ENCODE measurements at regions of chr6 and their contacts with region 1.

Region 1: DNA sequence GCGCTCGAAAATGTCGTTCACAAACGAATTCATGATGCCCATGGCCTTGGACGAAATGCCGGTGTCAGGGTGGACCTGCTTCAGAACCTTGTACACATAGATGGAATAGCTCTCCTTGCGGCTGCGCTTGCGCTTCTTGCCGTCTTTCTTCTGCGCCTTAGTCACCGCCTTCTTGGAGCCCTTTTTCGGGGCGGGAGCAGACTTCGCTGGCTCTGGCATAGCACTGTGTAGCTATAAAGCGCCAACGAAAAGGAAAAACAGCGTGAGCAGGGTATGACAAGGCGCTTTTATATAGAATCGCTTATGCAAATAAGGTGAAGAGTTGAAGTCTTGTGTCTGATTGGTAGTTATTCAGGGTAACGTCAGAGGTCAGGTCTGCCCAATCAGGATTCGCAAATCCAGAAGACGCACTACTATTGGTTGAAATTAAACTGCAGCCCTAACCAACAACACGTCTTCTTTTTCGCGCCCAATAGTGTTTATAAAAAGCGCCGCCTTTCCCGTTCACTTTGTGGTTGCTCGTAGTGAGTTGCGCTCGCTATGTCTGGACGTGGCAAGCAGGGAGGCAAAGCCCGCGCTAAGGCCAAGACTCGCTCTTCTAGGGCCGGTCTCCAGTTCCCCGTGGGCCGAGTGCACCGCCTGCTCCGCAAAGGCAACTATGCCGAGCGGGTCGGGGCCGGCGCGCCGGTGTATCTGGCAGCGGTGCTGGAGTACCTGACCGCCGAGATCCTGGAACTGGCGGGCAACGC is 114.8 kb upstream of the PRSS16 start:
- DNase-seq: peak; percentile 97 to 98 (median 98)
- H3K4me3 ChIP-seq: peak overlapping the region; percentile 33 to 75 (median 58)
- H3K4me3 Mint-ChIP-seq: no peak overlapping the region
- H3K27ac ChIP-seq: peak overlapping the region; percentile 74 to 75
- H3K27ac Mint-ChIP-seq: no peak overlapping the region
- H3K4me1 ChIP-seq: peaks cover 30 to 51% of the 10 kb centered on the region in 2 donors
- H3K4me1 Mint-ChIP-seq: peaks cover 9% of the 10 kb centered on the region
- H3K27me3 ChIP-seq: no peaks in the 10 kb centered on the region
- H3K27me3 Mint-ChIP-seq: peaks cover 0 to 1% (median 1%) of the 10 kb centered on the region in 3 donors
- CTCF ChIP-seq: no peak

Region 2: GRCh38 chr6:26025894-26026832 is 1106.5 kb before region 1 on chr6:
- intact Hi-C with region 1: loop called (anchors 10 kb)
- DNase-seq: peak; percentile 81 to 93 (median 87)
- H3K4me3 ChIP-seq: peak overlapping the region; percentile 60 to 90 (median 78)
- H3K4me3 Mint-ChIP-seq: peak overlapping the region; percentile 98
- H3K27ac ChIP-seq: peak overlapping the region; percentile 79 to 86
- H3K27ac Mint-ChIP-seq: peak overlapping the region; percentile 93 to 98 (median 95)
- H3K4me1 ChIP-seq: peaks cover 35 to 47% of the 10 kb centered on the region in 2 donors
- H3K4me1 Mint-ChIP-seq: peaks cover 33% of the 10 kb centered on the region
- H3K27me3 ChIP-seq: no peaks in the 10 kb centered on the region
- H3K27me3 Mint-ChIP-seq: peaks cover 0 to 2% (median 0%) of the 10 kb centered on the region in 3 donors
- CTCF ChIP-seq: peak; percentile 96

Region 3: GRCh38 chr6:26031595-26032339 is 1100.9 kb before region 1 on chr6:
- intact Hi-C with region 1: loop called (anchors 10 kb)
- DNase-seq: peak; percentile 74 to 83 (median 74)
- H3K4me3 ChIP-seq: peak overlapping the region; percentile 56 to 86 (median 82)
- H3K4me3 Mint-ChIP-seq: peak overlapping the region; percentile 89 to 95
- H3K27ac ChIP-seq: peak overlapping the region; percentile 53 to 66
- H3K27ac Mint-ChIP-seq: peak overlapping the region; percentile 73 to 94 (median 90)
- H3K4me1 ChIP-seq: peaks cover 35 to 50% of the 10 kb centered on the region in 2 donors
- H3K4me1 Mint-ChIP-seq: peaks cover 47% of the 10 kb centered on the region
- H3K27me3 ChIP-seq: no peaks in the 10 kb centered on the region
- H3K27me3 Mint-ChIP-seq: peaks cover 0 to 4% (median 3%) of the 10 kb centered on the region in 3 donors
- CTCF ChIP-seq: no peak

Region 4: DNA sequence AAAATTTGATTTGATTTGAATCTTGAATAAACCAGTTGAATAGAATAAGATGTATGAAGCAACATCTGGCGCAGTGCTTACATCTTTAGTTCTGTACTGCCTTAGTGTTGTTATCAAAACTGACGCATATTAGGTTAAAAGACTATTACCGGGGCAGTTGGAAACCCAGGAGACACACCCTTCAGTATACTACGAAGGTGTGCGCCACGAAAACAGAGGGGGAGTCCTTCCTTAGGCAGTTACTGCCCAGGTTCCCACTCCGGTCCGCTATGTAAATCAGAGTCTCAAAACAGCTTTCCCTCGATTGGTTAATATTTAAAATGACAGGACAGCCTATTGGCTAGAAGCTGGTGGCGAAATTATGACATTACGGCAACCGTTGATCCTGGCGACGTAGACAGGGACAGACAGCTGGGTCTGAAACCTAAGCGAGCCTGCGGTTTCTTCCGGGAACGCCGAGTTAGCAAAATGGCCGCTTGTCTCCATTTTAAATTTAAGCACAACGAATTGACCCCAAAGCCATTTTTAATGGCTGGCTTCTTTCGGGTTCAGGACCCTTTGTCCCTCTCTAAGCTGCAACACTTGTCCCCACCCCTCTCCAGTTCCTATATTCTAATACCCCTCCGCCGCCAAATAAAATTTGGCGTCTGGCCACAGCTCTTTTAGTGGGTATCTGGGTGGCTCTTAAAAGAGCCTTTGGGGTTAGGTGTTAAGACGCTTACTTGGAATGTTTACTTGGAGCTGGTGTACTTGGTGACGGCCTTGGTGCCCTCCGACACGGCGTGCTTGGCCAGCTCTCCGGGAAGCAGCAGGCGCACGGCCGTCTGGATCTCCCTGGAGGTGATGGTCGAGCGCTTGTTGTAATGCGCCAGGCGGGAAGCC is 1009.7 kb before region 1 on chr6:
- intact Hi-C with region 1: loop called in 1 of 2 experiments (anchors 10 kb)
- DNase-seq: peak; percentile 90 to 99 (median 97)
- H3K4me3 ChIP-seq: peak overlapping the region; percentile 87 to 100 (median 97)
- H3K4me3 Mint-ChIP-seq: peak overlapping the region; percentile 99
- H3K27ac ChIP-seq: peak overlapping the region; percentile 85 to 87
- H3K27ac Mint-ChIP-seq: peak overlapping the region; percentile 97 to 100 (median 99)
- H3K4me1 ChIP-seq: peaks cover 24 to 41% of the 10 kb centered on the region in 2 donors
- H3K4me1 Mint-ChIP-seq: peaks cover 46% of the 10 kb centered on the region
- H3K27me3 ChIP-seq: no peaks in the 10 kb centered on the region
- H3K27me3 Mint-ChIP-seq: peaks cover 0 to 4% (median 0%) of the 10 kb centered on the region in 3 donors
- CTCF ChIP-seq: no peak

Region 5: GRCh38 chr6:27146706-27147505 is 14.2 kb after region 1 on chr6:
- intact Hi-C with region 1: loop called (anchors 2 kb)
- DNase-seq: peak; percentile 97 to 100 (median 99)
- H3K4me3 ChIP-seq: peak overlapping the region; percentile 71 to 100 (median 97)
- H3K4me3 Mint-ChIP-seq: no peak overlapping the region
- H3K27ac ChIP-seq: peak overlapping the region; percentile 89 to 95
- H3K27ac Mint-ChIP-seq: no peak overlapping the region
- H3K4me1 ChIP-seq: peaks cover 24 to 37% of the 10 kb centered on the region in 2 donors
- H3K4me1 Mint-ChIP-seq: peaks cover 6% of the 10 kb centered on the region
- H3K27me3 ChIP-seq: no peaks in the 10 kb centered on the region
- H3K27me3 Mint-ChIP-seq: peaks cover 0 to 2% (median 0%) of the 10 kb centered on the region in 3 donors
- CTCF ChIP-seq: no peak

Region 6: DNA sequence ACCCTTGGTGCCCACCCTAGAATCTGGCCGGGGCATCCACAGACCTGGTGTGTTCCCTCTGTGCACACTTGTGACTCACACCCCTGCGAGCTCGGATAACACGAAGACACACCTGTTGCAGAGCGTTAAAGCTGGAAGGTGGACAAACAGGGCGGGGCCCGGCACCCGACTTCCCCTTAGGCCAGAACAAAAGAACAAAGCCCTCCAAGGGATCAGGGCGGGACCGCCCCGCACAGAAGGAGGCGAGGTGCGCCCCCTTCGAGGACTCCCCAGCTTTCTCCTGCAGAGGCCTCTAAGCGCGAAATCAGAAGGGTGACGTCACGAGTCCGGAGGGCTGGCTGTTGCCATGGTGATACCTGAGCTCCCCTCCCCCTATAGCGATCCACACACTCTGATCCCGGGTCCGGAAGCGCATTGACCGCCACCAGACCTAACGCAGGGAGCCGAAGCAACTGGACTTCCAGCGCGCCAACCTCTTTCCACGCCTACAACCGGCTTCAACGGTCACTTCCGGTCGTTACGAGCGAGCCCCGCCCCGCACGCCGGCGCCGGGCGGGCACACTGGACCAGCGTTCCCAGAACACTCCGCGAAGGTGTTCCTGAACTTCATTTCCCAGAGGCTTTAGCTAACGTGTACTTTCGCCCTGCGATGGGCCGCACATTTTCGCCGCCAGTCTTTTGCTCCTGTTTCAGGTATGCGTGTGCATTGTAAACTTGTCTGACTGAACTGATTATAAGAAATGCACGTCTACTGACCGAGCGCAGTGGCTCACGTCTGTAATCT is 340.1 kb after region 1 on chr6 and contains the start of gene ZNF184:
- intact Hi-C with region 1: loop called in 1 of 2 experiments (anchors 10 kb)
- DNase-seq: peak; percentile 87 to 93 (median 91)
- H3K4me3 ChIP-seq: peak within 1 kb of the TSS; percentile 55 to 88 (median 81)
- H3K4me3 Mint-ChIP-seq: peak within 1 kb of the TSS; percentile 97
- H3K27ac ChIP-seq: peak within 1 kb of the TSS; percentile 75 to 89
- H3K27ac Mint-ChIP-seq: peak within 1 kb of the TSS; percentile 89 to 98 (median 95)
- H3K4me1 ChIP-seq: peaks cover 12 to 16% of the 10 kb centered on the region in 2 donors
- H3K4me1 Mint-ChIP-seq: peaks cover 19% of the 10 kb centered on the region
- H3K27me3 ChIP-seq: no peaks in the 10 kb centered on the region
- H3K27me3 Mint-ChIP-seq: peaks cover 0 to 3% (median 2%) of the 10 kb centered on the region in 3 donors
- CTCF ChIP-seq: no peak
- polyA plus RNA-seq, gene ZNF184: 1.00 to 1.5 (median 1.5) TPM

Region 7: GRCh38 chr6:27592481-27593199 is 459.9 kb after region 1 on chr6:
- intact Hi-C with region 1: no loop called
- DNase-seq: no peak
- H3K4me3 ChIP-seq: no peak overlapping the region
- H3K4me3 Mint-ChIP-seq: no peak overlapping the region
- H3K27ac ChIP-seq: no peak overlapping the region
- H3K27ac Mint-ChIP-seq: no peak overlapping the region
- H3K4me1 ChIP-seq: no peaks in the 10 kb centered on the region
- H3K4me1 Mint-ChIP-seq: no peaks in the 10 kb centered on the region
- H3K27me3 ChIP-seq: peaks cover 47 to 68% of the 10 kb centered on the region in 2 donors
- H3K27me3 Mint-ChIP-seq: peaks cover 15 to 30% (median 30%) of the 10 kb centered on the region in 3 donors
- CTCF ChIP-seq: no peak

Region 8: GRCh38 chr6:28335564-28336283 is 1203.0 kb after region 1 on chr6 and contains the start of gene ZSCAN31:
- intact Hi-C with region 1: loop called in 1 of 2 experiments (anchors 10 kb)
- DNase-seq: peak; percentile 91 to 98 (median 98)
- H3K4me3 ChIP-seq: peak within 1 kb of the TSS; percentile 86 to 94 (median 89)
- H3K4me3 Mint-ChIP-seq: no peak within 1 kb of the TSS
- H3K27ac ChIP-seq: peak within 1 kb of the TSS; percentile 88 to 90
- H3K27ac Mint-ChIP-seq: peak within 1 kb of the TSS in 1 of 7 donors; percentile 57
- H3K4me1 ChIP-seq: peaks cover 15 to 16% of the 10 kb centered on the region in 2 donors
- H3K4me1 Mint-ChIP-seq: peaks cover 5% of the 10 kb centered on the region
- H3K27me3 ChIP-seq: no peaks in the 10 kb centered on the region
- H3K27me3 Mint-ChIP-seq: no peaks in the 10 kb centered on the region
- CTCF ChIP-seq: no peak
- polyA plus RNA-seq, gene ZSCAN31: 0.25 to 0.35 TPM in 2 of 3 donors, not detected in the other

Measured in CD14-positive monocyte (primary cell).